Right ventricle myocardium superior (tissue), 1 donor: ENCODE measurements at regions of chr1 and their contacts with region 1.

Region 1: DNA sequence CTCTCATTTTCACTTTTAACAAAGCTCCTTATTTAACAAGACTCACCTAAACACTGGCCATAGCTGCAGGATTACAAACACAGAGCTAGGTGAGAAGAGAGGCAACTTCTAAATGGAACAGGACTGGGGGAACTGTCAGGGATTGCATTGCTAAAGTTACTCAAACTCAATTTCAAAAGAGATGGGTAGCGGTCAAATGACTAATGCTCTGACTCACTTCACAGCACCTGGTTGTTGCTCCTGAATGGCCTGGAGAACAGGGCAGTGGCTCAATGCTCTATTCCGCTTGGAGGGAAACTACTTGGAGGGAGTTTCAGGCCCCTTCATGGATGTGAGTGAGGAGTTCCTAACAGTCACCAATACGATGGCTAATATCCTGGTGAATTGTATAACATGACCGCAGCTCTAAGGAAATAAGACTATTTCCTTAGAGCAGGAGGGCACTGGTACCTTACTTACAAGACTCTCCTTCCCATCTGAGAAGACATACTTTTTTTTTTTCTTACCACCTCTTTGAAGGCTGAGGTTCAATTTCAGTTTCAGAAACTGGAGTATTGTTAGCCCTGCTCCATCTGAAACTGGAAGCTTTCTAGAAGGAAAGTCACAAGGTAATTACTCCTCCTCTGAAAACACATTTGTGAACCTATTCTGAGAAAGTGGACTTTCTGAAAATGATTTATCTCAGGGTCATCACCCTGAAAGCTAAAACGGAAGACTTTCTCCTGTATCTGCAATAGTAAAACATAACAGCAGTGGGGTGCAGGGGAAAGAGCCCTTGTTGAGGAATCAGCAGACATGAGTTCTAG is 9.5 kb downstream of the DPT start:
- DNase-seq: no peak
- ATAC-seq: no peak

Region 2: DNA sequence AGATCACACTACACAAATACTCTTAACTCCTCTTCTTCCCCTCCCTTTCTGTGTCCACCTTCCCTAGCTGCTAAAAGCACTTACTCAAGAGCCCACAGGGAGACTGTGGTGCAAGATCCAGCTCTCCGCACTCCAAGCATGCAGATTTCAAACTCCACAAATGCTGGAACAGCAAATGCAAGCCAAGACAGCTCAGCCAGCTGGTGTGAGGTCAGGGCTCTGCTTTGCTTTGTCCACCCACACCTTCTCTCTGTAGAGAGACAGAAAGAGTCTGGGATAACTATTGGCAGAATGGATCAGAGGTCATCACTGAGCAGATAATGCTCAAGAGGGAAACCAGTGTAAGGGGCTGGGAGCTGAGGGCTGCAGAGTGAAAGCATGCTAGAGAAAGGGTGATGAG is 54.7 kb after region 1 on chr1:
- intact Hi-C with region 1: loop called (anchors 5 kb)
- DNase-seq: peak; percentile 76
- ATAC-seq: peak; percentile 98